Colonic mucosa (tissue), 4 donors: ENCODE measurements at regions of chr21 and their contacts with region 1.

Region 1: DNA sequence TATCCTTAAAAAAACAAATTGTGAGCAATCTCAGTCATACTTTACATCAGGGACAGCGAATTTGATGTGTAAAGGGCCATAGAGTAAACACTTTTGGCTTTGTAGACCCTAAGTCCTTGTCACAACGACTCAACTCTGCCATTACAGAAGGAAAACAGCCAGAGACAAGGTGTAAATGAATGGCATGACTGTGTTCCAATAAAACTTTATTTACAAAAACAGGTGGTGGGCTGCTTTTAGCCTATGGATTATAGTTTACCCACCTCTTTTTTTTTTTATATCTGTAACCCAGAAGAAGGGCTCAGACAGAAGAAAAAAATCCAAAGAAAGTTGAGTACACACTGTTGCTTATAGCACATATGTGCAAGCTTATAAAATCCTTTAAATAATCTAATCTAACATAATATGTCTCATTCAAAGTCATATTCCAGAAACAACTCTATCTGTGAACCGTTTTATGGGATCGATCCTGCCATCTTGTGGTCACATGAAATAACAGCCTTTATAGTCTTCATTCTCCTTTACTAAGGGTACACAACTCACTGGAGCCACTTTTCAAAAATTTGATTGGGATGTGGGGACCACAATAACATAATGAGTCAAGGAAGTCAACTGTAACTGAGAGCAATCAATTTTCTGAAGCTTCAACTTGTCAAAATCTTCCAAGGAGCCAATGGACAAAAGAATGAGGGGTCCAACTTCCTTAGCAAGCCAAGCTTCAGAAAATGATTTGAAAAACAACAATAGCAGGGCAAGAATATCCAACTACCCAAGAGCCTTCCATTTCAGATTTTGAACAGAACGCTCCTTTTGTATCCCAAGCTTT is 142.2 kb upstream of the KRTAP19-8 start:
- DNase-seq: no peak
- H3K4me3 ChIP-seq: no peak overlapping the region
- H3K27ac ChIP-seq: no peak overlapping the region
- H3K4me1 ChIP-seq: no peaks in the 10 kb centered on the region
- H3K27me3 ChIP-seq: no peaks in the 10 kb centered on the region
- CTCF ChIP-seq: no peak

Region 2: GRCh38 chr21:30758306-30758705 is 422.2 kb before region 1 on chr21:
- intact Hi-C with region 1: no loop called
- DNase-seq: no peak
- H3K4me3 ChIP-seq: no peak overlapping the region
- H3K27ac ChIP-seq: no peak overlapping the region
- H3K4me1 ChIP-seq: no peaks in the 10 kb centered on the region
- H3K27me3 ChIP-seq: no peaks in the 10 kb centered on the region
- CTCF ChIP-seq: no peak

Region 3: DNA sequence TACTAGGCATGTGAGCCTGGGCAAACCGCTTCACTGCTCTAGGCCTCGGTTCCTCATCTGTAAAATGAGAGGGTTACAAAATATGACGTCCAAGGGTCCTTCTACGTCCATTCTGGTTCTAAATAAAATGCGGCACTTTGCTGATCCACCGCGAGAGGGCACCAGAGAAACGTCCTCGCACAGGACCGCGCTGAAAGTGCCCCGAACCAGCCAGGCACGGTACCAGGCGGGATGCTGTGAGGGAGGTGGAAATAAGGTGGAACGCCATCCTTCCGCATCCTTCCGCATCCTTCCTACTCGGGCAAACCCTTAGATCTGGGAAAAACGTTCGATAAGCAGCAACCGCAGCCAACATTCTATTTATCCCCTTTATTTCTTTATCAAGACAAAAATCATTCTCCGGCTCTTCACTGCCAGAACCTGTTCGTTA is 81.9 kb before region 1 on chr21:
- intact Hi-C with region 1: loop called (anchors 2 kb)
- DNase-seq: peak; percentile 61
- H3K4me3 ChIP-seq: no peak overlapping the region
- H3K27ac ChIP-seq: no peak overlapping the region
- H3K4me1 ChIP-seq: no peaks in the 10 kb centered on the region
- H3K27me3 ChIP-seq: no peaks in the 10 kb centered on the region
- CTCF ChIP-seq: peak; percentile 74